Heart left ventricle (tissue), 16 donors: ENCODE measurements at regions of chr19 and their contacts with region 1.

Region 1: DNA sequence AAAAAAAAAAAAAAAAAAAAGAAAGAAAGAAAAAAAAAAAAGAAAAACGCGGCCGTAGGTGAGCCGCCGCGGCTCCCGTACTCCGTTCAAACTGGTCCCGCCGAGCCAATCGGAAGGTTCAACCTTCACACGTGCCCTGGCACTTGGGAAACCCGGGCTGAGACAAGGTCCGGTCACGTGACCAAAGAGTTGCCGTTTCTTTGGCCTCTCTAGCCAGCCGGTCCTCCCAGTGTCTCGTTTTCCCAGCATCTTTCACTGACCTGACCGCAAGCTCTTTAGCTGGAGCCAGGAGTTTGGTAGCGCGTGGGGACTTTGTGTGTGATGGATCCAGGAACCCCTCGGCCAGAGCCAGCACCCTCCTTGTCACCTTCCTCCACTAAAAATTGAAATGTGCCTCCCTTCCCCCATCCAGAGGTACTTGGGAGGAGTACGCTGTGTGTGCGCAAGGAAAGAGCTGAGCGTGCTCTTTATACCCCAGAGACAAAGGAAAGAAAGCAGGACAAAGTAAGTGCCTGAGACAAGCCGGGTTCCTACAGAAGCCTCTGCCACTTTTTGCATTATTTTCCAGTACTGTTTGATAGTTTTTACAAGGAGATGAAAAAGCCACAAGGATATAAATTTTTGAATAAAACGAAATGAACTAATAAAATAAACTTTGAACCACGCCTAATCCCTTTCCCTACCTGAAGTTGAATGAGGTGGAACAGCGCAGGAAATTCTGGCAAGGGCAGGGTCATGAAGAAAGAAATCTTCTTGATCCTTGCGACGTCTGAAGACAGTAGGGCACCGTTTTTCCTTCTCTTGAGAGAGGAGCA is 959 bp downstream of the TNPO2 start:
- DNase-seq: peak; percentile 96 to 99 (median 98)
- ATAC-seq: peak; percentile 92 to 96 (median 94)
- H3K4me3 ChIP-seq: peak overlapping the region; percentile 65 to 98 (median 79)
- H3K27ac ChIP-seq: peak overlapping the region; percentile 88 to 98 (median 96)
- H3K4me1 ChIP-seq: peaks cover 4 to 44% (median 33%) of the 10 kb centered on the region in 12 donors
- H3K27me3 ChIP-seq: no peaks in the 10 kb centered on the region
- CTCF ChIP-seq: no peak
- POLR2A ChIP-seq: no peak

Region 2: GRCh38 chr19:12681074-12681951 is 41.5 kb before region 1 on chr19 and contains the start of gene DHPS:
- intact Hi-C with region 1: loop called in 1 of 10 experiments (anchors 5 kb)
- DNase-seq: peak; percentile 90 to 96 (median 95)
- ATAC-seq: peak; percentile 89 to 95 (median 90)
- H3K4me3 ChIP-seq: peak within 1 kb of the TSS; percentile 55 to 99 (median 90)
- H3K27ac ChIP-seq: peak within 1 kb of the TSS; percentile 80 to 100 (median 95)
- H3K4me1 ChIP-seq: peaks cover 0 to 21% (median 8%) of the 10 kb centered on the region in 12 donors
- H3K27me3 ChIP-seq: no peaks in the 10 kb centered on the region
- CTCF ChIP-seq: peak in 1 of 12 donors; percentile 20
- POLR2A ChIP-seq: peak in 1 of 2 donors; percentile 27
- total RNA-seq, gene DHPS: 47.6 to 121 (median 54.6) TPM